H1 (cell line): ENCODE measurements at regions of chr7 and their contacts with region 1.

Region 1: DNA sequence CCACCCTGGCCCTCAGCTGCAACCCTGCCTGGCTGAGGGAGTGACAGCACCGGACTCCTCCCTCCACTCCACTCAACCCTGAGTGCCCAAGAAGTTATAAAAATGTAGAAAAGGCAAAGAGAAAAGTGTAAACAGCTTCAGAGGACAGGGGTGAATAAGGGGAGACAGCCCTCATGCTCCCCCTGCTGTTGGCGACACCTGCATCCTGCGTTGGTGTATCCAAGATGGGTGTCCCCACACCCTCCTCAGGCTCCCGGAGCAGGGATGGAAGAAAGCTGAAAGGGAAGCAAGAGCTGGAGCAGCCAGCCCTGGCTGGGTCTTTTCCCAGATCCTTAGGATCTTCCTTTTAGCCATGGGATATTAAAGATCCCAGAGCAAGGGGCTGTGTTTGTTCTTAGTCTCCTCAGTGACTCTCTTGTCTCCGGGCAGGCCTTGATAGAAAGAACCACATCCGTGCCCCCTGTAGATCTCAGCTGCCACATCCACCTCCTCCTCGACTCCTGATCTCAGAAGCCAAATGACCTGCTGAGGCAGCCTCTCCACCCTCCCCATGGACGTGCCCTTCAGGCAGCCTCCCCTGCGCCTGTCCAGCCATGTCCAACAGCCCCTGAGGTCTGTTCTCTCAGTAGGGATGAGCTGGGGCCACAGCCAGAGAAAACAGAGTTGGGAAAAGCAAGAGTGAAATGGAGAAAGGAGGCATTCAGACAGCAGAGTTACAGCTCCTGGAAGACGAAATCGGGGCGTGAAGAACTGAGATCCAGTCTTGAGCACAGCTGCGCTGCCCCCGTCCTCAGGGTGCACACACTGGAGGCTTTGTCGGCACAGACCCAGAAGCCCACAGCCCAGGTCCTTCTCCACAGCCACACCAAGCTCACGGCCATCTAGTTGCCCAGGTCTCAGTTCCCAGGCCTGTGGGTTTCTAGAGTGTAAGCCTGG is 6.8 kb downstream of the FAM131B start:
- DNase-seq: no peak
- H3K4me3 ChIP-seq: no peak overlapping the region
- H3K27ac ChIP-seq: no peak overlapping the region
- H3K4me1 ChIP-seq: peaks cover 0 to 8% (median 4%) of the 10 kb centered on the region in 4 experiments; a peak in 4 of 7 replicates
- H3K27me3 ChIP-seq: no peaks in the 10 kb centered on the region
- CTCF ChIP-seq: peak; percentile 24 to 54 (median 39); a peak in 3 of 4 replicates
- EP300 ChIP-seq: no peak
- POLR2A ChIP-seq: no peak
- RAD21 ChIP-seq: peak in 1 of 2 experiments; percentile 10; a peak in 1 of 4 replicates

Region 2: DNA sequence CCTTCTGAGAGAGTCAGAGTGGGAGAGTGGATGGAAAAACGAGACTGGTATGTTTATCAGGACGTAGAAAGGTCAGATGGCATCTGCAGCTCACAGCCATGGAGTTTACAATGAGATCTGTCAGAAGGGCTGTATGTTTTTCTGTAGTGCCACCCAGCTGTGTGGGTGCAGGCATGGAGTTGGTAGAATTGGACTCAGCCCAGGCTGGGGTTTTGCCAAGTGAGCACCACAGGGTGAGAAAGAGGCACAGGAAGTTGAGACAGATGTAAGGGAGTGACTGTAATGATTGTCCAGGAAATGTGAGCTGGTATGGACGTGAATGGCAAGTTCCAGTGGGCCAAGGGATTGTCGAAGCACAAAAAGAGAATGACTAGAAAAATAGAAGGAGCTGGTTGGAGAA is 16.4 kb after region 1 on chr7:
- CTCF ChIA-PET with region 1: interaction called, 43 read pairs
- POLR2A ChIA-PET with region 1: interaction called, 233 read pairs
- DNase-seq: no peak
- H3K4me3 ChIP-seq: no peak overlapping the region
- H3K27ac ChIP-seq: no peak overlapping the region
- H3K4me1 ChIP-seq: peaks cover 6 to 22% (median 13%) of the 10 kb centered on the region in 4 experiments; a peak in 5 of 7 replicates
- H3K27me3 ChIP-seq: no peaks in the 10 kb centered on the region
- CTCF ChIP-seq: peak in 1 of 3 experiments; percentile 21; a peak in 1 of 4 replicates
- EP300 ChIP-seq: no peak
- POLR2A ChIP-seq: no peak
- RAD21 ChIP-seq: peak; percentile 14 to 28; a peak in 1 of 4 replicates

Region 3: GRCh38 chr7:143391462-143392404 is 36.0 kb after region 1 on chr7:
- CTCF ChIA-PET with region 1: interaction called, 15 read pairs
- POLR2A ChIA-PET with region 1: interaction called, 39 read pairs
- DNase-seq: no peak
- H3K4me3 ChIP-seq: no peak overlapping the region
- H3K27ac ChIP-seq: no peak overlapping the region
- H3K4me1 ChIP-seq: no peaks in the 10 kb centered on the region; a peak in 1 of 7 replicates
- H3K27me3 ChIP-seq: no peaks in the 10 kb centered on the region
- CTCF ChIP-seq: no peak
- EP300 ChIP-seq: no peak
- POLR2A ChIP-seq: no peak
- RAD21 ChIP-seq: no peak